Activated naive CD4-positive, alpha-beta T cell treated with anti-CD3 and anti-CD28 coated beads for 36 hours (primary cell): ENCODE measurements at regions of chr14 and their contacts with region 1.

Region 1: DNA sequence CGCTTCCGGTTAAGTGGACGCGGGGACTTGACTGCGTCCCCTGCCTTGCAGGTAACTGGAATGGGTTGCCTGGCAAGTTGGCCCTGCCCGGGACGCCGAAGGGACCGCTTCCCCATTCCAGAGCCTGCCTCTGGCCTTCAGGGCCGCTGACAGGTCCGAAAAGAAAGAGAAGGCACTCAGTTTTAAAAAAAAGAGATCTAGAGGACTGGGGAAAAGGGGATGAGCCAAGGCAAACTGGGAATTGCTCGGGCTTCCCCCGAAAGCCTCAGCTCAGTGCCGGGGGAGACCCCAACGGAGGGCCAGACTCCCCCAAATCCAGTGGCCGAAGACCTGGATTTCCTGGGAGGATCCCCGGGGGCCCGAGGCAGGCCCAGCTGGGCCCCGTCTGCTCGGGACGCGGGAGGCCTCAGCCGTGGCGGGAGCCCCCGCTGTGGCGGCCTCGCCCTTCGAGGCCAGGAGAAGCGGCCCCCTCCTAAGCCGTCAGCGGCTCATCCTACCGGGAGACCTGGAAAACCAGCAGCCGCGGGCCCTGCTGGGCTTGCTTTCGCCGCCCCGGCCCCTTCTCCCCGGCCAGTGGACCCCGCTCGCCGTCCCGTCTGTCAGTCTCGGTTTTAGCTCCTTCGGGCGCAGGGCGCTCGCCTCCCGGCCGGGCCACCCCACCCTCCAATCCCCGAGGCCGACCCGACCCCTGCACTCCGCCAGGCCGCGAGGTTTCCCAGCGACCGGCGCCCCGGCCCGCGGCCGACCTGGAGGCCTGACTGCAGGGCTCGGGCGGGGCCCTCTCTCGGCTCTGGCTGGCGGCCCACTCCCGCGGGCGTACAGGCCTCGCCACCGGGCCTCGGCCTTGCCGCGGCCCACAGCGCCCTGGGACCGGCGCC is 12.5 kb downstream of the OTX2 start:
- DNase-seq: no peak
- H3K4me3 Mint-ChIP-seq: no peak overlapping the region
- H3K27ac Mint-ChIP-seq: no peak overlapping the region
- H3K4me1 Mint-ChIP-seq: peaks cover 20% of the 10 kb centered on the region
- H3K27me3 Mint-ChIP-seq: peaks cover 75% of the 10 kb centered on the region

Region 2: GRCh38 chr14:56808383-56809269 is 10.8 kb after region 1 on chr14:
- CTCF ChIA-PET with region 1: no interaction called
- intact Hi-C with region 1: loop called (anchors 2 kb)
- DNase-seq: no peak
- H3K4me3 Mint-ChIP-seq: peak overlapping the region; percentile 18
- H3K27ac Mint-ChIP-seq: no peak overlapping the region
- H3K4me1 Mint-ChIP-seq: peaks cover 32% of the 10 kb centered on the region
- H3K27me3 Mint-ChIP-seq: peaks cover 79% of the 10 kb centered on the region